CD4-positive, alpha-beta T cell (primary cell): ENCODE measurements at regions of chr16 and their contacts with region 1.

Region 1: GRCh38 chr16:67286441-67287235 is 7.3 kb downstream of the PLEKHG4 start:
- DNase-seq: no peak
- ATAC-seq: no peak
- H3K4me3 ChIP-seq: no peak overlapping the region
- H3K4me3 Mint-ChIP-seq: no peak overlapping the region
- H3K27ac ChIP-seq: no peak overlapping the region
- H3K27ac Mint-ChIP-seq: no peak overlapping the region
- H3K4me1 ChIP-seq: peaks cover 14% of the 10 kb centered on the region
- H3K4me1 Mint-ChIP-seq: no peaks in the 10 kb centered on the region
- H3K27me3 ChIP-seq: no peaks in the 10 kb centered on the region
- H3K27me3 Mint-ChIP-seq: no peaks in the 10 kb centered on the region
- CTCF ChIP-seq: no peak

Region 2: GRCh38 chr16:67311607-67312488 is 25.2 kb after region 1 on chr16:
- CTCF ChIA-PET with region 1: no interaction called
- POLR2A ChIA-PET with region 1: no interaction called
- intact Hi-C with region 1: loop called in 1 of 2 experiments (anchors 1 kb)
- DNase-seq: peak in 6 of 14 experiments; percentile 5 to 35 (median 20)
- ATAC-seq: peak; percentile 70
- H3K4me3 ChIP-seq: no peak overlapping the region
- H3K4me3 Mint-ChIP-seq: no peak overlapping the region
- H3K27ac ChIP-seq: no peak overlapping the region
- H3K27ac Mint-ChIP-seq: no peak overlapping the region
- H3K4me1 ChIP-seq: no peaks in the 10 kb centered on the region
- H3K4me1 Mint-ChIP-seq: no peaks in the 10 kb centered on the region
- H3K27me3 ChIP-seq: peaks cover 0 to 2% of the 10 kb centered on the region in 2 experiments
- H3K27me3 Mint-ChIP-seq: no peaks in the 10 kb centered on the region
- CTCF ChIP-seq: no peak